Prostate gland (tissue), 2 donors: ENCODE measurements at regions of chr7 and their contacts with region 1.

Region 1: GRCh38 chr7:80392229-80393169 is 119.4 kb downstream of the GNAT3 start:
- DNase-seq: no peak
- H3K4me3 ChIP-seq: no peak overlapping the region
- H3K27ac ChIP-seq: no peak overlapping the region
- H3K4me1 ChIP-seq: no peaks in the 10 kb centered on the region
- H3K27me3 ChIP-seq: no peaks in the 10 kb centered on the region
- CTCF ChIP-seq: peak in 3 of 4 experiments; percentile 62 to 74 (median 71)
- POLR2A ChIP-seq: no peak

Region 2: GRCh38 chr7:80060218-80060806 is 332.2 kb before region 1 on chr7:
- intact Hi-C with region 1: loop called (anchors 10 kb)
- DNase-seq: no peak
- H3K4me3 ChIP-seq: no peak overlapping the region
- H3K27ac ChIP-seq: no peak overlapping the region
- H3K4me1 ChIP-seq: no peaks in the 10 kb centered on the region
- H3K27me3 ChIP-seq: no peaks in the 10 kb centered on the region
- CTCF ChIP-seq: peak; percentile 17 to 64 (median 52)
- POLR2A ChIP-seq: no peak

Region 3: DNA sequence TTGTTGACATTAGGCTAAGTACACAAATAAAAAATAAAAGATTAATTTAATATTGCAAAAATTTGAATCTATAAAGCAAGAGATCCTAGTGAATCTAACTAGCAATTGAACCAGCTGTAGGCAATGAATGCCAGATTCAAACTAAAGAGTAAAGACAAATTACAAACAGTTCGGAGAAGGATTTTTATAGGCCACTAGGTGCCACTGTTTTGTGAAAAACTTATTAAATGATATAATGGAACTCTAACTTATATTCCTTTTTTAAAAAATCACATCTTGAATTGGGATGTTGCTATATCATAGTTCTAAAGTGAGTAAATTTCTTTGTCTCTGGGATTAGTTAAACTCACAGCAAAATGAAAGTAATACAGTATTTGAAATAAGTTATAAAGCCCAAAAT is 297.0 kb before region 1 on chr7:
- intact Hi-C with region 1: loop called (anchors 10 kb)
- DNase-seq: no peak
- H3K4me3 ChIP-seq: no peak overlapping the region
- H3K27ac ChIP-seq: no peak overlapping the region
- H3K4me1 ChIP-seq: no peaks in the 10 kb centered on the region
- H3K27me3 ChIP-seq: no peaks in the 10 kb centered on the region
- CTCF ChIP-seq: peak in 3 of 4 experiments; percentile 47 to 54 (median 48)
- POLR2A ChIP-seq: no peak

Region 4: GRCh38 chr7:80134536-80135320 is 257.8 kb before region 1 on chr7 and contains the start of gene GNAI1:
- intact Hi-C with region 1: loop called (anchors 5 kb)
- DNase-seq: peak; percentile 44
- H3K4me3 ChIP-seq: peak within 1 kb of the TSS; percentile 85 to 89
- H3K27ac ChIP-seq: peak within 1 kb of the TSS; percentile 86 to 87
- H3K4me1 ChIP-seq: peaks cover 5% of the 10 kb centered on the region
- H3K27me3 ChIP-seq: no peaks in the 10 kb centered on the region
- CTCF ChIP-seq: peak in 3 of 4 experiments; percentile 27 to 46 (median 32)
- POLR2A ChIP-seq: peak; percentile 64
- total RNA-seq, gene GNAI1: 30.2 to 40.4 TPM

Region 5: GRCh38 chr7:80186721-80187120 is 205.8 kb before region 1 on chr7:
- intact Hi-C with region 1: no loop called
- DNase-seq: no peak
- H3K4me3 ChIP-seq: no peak overlapping the region
- H3K27ac ChIP-seq: no peak overlapping the region
- H3K4me1 ChIP-seq: no peaks in the 10 kb centered on the region
- H3K27me3 ChIP-seq: no peaks in the 10 kb centered on the region
- CTCF ChIP-seq: no peak
- POLR2A ChIP-seq: no peak

Region 6: DNA sequence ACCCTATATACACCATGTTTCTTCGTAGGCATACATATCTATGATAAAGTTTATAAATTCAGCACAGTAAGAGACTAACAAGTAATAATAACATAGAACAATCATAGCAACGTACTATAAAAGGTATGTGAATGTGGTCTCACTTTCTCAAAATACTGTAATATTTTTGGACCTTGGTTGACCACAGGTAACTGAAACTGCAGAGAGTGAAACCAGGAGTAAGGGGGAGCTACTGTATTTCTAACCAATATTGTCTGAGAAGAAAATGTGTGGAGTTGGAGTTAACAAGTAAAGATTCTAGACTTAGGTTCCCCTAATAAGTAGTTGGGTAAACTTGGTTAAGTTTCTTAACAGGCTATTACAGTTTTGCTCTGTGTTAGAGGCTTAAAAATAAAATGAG is 185.7 kb before region 1 on chr7:
- intact Hi-C with region 1: no loop called
- DNase-seq: no peak
- H3K4me3 ChIP-seq: no peak overlapping the region
- H3K27ac ChIP-seq: no peak overlapping the region
- H3K4me1 ChIP-seq: no peaks in the 10 kb centered on the region
- H3K27me3 ChIP-seq: no peaks in the 10 kb centered on the region
- CTCF ChIP-seq: no peak
- POLR2A ChIP-seq: no peak